B cell (primary cell): ENCODE measurements at regions of chr15 and their contacts with region 1.

Region 1: GRCh38 chr15:75921729-75922703 is 18.3 kb downstream of the FBXO22 start:
- DNase-seq: peak; percentile 31
- ATAC-seq: no peak
- H3K4me3 ChIP-seq: no peak overlapping the region
- H3K4me3 Mint-ChIP-seq: no peak overlapping the region
- H3K27ac ChIP-seq: no peak overlapping the region
- H3K27ac Mint-ChIP-seq: no peak overlapping the region
- H3K4me1 ChIP-seq: peaks cover 1 to 7% of the 10 kb centered on the region in 2 donors
- H3K4me1 Mint-ChIP-seq: peaks cover 27% of the 10 kb centered on the region
- H3K27me3 ChIP-seq: no peaks in the 10 kb centered on the region
- H3K27me3 Mint-ChIP-seq: no peaks in the 10 kb centered on the region
- CTCF ChIP-seq: no peak

Region 2: DNA sequence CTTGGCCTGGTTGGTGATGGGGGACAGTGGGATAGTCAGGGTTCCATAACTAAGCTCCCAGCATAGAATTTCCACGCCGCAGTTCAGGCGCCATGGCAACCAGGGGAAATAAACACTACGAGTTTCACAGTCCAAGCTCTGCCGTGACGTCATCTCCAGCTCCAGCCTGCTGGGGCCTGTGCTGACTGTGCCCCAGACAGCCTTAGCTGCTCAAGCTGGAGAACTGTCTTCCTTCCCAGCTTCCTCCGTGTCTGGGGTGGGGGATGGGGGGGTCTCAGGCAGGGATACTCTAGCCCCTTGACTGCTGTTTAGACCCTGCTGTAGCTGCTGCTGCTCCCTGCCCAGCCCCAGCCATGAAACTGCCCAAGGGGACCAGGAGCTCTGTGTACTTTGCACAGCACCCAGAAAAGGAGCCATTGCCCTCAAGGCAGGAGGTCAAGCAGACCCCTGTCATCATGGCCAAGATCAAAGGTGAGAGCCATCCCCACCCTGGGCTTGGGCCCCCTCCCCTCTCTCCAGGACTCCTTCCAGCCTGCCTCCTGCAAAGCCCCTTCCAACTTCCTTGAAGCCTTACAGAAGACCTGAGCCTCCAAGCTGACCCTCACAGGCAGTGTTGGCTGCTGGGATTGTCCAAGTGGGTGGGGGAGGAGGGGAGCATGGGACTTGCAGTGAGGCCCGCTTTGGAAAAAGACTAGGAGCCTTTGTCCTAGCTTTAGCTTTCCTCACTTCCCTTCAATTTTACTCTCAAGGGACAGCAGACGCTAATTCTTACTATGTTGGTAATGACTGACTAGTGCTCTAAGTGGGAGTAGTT is 198.0 kb before region 1 on chr15:
- CTCF ChIA-PET with region 1: no interaction called
- POLR2A ChIA-PET with region 1: no interaction called
- intact Hi-C with region 1: loop called (anchors 10 kb)
- DNase-seq: peak; percentile 72
- ATAC-seq: peak; percentile 57
- H3K4me3 ChIP-seq: no peak overlapping the region
- H3K4me3 Mint-ChIP-seq: no peak overlapping the region
- H3K27ac ChIP-seq: no peak overlapping the region
- H3K27ac Mint-ChIP-seq: no peak overlapping the region
- H3K4me1 ChIP-seq: peaks cover 0 to 7% of the 10 kb centered on the region in 2 donors
- H3K4me1 Mint-ChIP-seq: peaks cover 11% of the 10 kb centered on the region
- H3K27me3 ChIP-seq: peaks cover 0 to 7% (median 2%) of the 10 kb centered on the region in 4 experiments
- H3K27me3 Mint-ChIP-seq: peaks cover 21% of the 10 kb centered on the region
- CTCF ChIP-seq: no peak